Posterior vena cava (tissue), 2 donors: ENCODE measurements at regions of chr1 and their contacts with region 1.

Region 1: GRCh38 chr1:20499105-20499504 is 8.8 kb downstream of the MUL1 start:
- DNase-seq: no peak

Region 2: GRCh38 chr1:20446796-20447195 is 52.3 kb before region 1 on chr1:
- intact Hi-C with region 1: loop called in 1 of 2 experiments (anchors 2 kb)
- DNase-seq: peak; percentile 48

Region 3: GRCh38 chr1:20540281-20540680 is 41.2 kb after region 1 on chr1:
- intact Hi-C with region 1: no loop called
- DNase-seq: no peak

Region 4: GRCh38 chr1:20727384-20728316 is 228.5 kb after region 1 on chr1:
- intact Hi-C with region 1: no loop called
- DNase-seq: peak; percentile 57